ENCODE measurements at regions of chr12 and their contacts with region 1.

Region 1: GRCh38 chr12:62778187-62778586 is 156.8 kb downstream of the PPM1H start:
- DNase-seq: no peak
- H3K4me3 ChIP-seq: no peak overlapping the region
- H3K27ac ChIP-seq: no peak overlapping the region
- H3K4me1 ChIP-seq: no peaks in the 10 kb centered on the region
- H3K27me3 ChIP-seq: no peaks in the 10 kb centered on the region
- CTCF ChIP-seq: no peak

Region 2: DNA sequence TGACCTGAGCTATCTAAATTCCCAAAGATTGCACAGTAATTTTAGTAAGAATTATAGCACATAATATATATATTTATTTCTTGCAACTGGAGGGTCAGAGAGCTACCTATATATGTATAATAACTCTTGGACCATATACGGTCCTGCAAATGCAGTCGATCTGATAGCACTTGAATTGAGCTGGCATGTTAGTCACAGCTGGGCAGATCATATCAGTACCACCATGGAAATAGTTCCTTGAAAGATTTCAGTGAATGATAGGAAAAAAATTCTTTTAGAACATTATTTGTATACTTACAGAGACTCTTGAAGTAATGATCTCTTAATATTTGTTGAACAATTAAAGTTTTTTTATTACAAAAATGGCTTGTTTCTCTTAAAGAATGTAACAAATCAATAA is 406.1 kb before region 1 on chr12:
- CTCF ChIA-PET with region 1: no interaction called
- POLR2A ChIA-PET with region 1: interaction called, 21 read pairs
- intact Hi-C with region 1: no loop called
- DNase-seq: no peak
- H3K4me3 ChIP-seq: no peak overlapping the region
- H3K27ac ChIP-seq: no peak overlapping the region
- H3K4me1 ChIP-seq: peaks cover 12% of the 10 kb centered on the region
- H3K27me3 ChIP-seq: no peaks in the 10 kb centered on the region
- CTCF ChIP-seq: no peak

Measured in A673 (cell line).